Spleen (tissue), 13 donors: ENCODE measurements at regions of chr4 and their contacts with region 1.

Region 1: DNA sequence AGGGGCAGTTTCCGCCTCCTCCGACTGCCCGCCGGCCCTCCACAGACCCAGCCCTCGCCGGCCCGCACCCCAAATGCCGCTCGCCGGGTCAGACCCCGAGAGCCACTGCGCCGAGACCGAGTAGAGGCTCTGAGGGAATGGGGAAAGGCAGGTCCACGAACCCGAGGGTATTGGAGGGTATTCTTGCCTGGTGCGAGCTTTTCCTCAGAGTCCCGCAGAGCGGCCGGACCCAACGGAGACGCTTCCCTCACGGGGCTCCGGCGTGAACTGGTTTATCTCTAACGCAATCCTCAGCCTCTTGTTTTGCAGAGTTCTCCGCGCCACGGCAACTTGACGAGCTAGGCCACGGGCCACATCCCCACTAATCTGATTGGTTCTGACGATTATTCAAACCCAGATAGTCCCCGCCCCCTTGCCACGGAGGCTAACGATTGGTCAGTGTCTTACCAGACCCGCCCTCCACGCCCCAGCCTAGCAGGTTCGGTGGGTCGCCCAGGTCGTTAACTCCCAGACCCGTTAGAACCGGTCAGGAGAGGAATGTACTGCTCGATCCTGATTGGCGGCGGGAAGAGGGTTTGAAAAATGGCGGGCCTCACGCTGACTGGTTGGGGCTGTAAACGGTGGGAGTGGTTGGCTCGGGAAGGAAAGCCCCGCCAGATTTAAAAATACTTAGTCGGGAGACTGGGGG is at the start of gene HMGB2:
- DNase-seq: peak; percentile 99
- H3K4me3 ChIP-seq: peak within 1 kb of the TSS; percentile 74 to 99 (median 92)
- H3K27ac ChIP-seq: peak within 1 kb of the TSS; percentile 96 to 100 (median 99)
- H3K4me1 ChIP-seq: peaks cover 16 to 52% (median 40%) of the 10 kb centered on the region in 6 donors
- H3K27me3 ChIP-seq: no peaks in the 10 kb centered on the region
- CTCF ChIP-seq: peak in 1 of 11 experiments; percentile 22
- POLR2A ChIP-seq: peak; percentile 90 to 97 (median 90)
- total RNA-seq, gene HMGB2: 78.2 to 143 (median 126) TPM

Region 2: DNA sequence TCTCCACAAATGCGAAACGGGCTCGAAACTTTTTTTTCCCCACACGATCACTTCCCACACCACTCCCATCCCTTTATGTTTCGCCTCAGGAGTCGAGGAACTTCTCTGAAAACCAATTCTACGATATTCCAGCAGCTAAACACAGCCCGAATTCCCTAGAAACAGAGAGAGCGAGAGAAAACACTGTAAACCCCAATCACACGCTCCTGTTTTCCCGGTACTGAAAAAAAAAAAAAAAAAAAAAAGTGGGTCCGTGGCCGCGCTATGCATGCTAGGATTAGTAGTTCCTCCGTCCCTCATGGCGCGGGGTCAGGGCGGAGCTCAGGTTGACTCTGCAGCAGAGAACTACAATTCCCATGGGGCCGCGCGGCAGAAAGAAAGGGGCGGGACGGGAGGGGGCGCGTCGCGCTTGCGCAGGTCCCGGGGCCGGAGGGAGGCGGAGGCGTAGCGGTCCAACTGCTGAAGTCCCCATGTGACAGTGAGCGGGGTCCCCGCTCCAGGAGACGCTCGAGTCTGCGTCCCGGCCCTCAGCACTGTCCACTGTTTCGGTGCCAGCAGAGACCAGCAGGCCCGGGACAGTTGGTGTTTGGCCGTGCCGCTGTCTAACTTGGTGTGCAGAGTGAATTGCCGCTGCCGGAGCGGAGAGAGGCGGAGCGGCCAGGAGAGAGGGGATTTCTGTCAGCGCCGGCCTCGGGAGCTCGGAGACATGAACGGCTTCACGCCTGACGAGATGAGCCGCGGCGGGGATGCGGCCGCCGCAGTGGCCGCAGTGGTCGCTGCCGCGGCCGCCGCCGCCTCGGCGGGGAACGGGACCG is 36.5 kb after region 1 on chr4 and contains the start of gene SAP30:
- intact Hi-C with region 1: loop called (anchors 5 kb)
- DNase-seq: peak; percentile 98
- H3K4me3 ChIP-seq: peak within 1 kb of the TSS; percentile 76 to 93 (median 88)
- H3K27ac ChIP-seq: peak within 1 kb of the TSS; percentile 87 to 99 (median 96)
- H3K4me1 ChIP-seq: peaks cover 4 to 62% (median 33%) of the 10 kb centered on the region in 6 donors
- H3K27me3 ChIP-seq: peaks cover 0 to 15% (median 0%) of the 10 kb centered on the region in 7 donors
- CTCF ChIP-seq: peak in 3 of 11 experiments; percentile 14 to 26 (median 16)
- POLR2A ChIP-seq: peak; percentile 85 to 98 (median 89)
- total RNA-seq, gene SAP30: 6.0 to 43.2 (median 20.4) TPM